ENCODE measurements at regions of chr20 and their contacts with region 1.

Region 1: GRCh38 chr20:11755071-11755841 is 162.4 kb upstream of the BTBD3 start:
- DNase-seq: no peak
- H3K4me3 Mint-ChIP-seq: no peak overlapping the region
- H3K27ac Mint-ChIP-seq: no peak overlapping the region
- H3K4me1 Mint-ChIP-seq: no peaks in the 10 kb centered on the region
- H3K27me3 Mint-ChIP-seq: no peaks in the 10 kb centered on the region
- CTCF ChIP-seq: no peak

Region 2: GRCh38 chr20:11734431-11734830 is 20.8 kb before region 1 on chr20:
- CTCF ChIA-PET with region 1: no interaction called
- intact Hi-C with region 1: loop called (anchors 1 kb)
- DNase-seq: no peak
- H3K4me3 Mint-ChIP-seq: no peak overlapping the region
- H3K27ac Mint-ChIP-seq: no peak overlapping the region
- H3K4me1 Mint-ChIP-seq: no peaks in the 10 kb centered on the region
- H3K27me3 Mint-ChIP-seq: no peaks in the 10 kb centered on the region
- CTCF ChIP-seq: no peak

Measured in Calu3 (cell line).